Endothelial cell of umbilical vein (primary cell): ENCODE measurements at regions of chr5 and their contacts with region 1.

Region 1: DNA sequence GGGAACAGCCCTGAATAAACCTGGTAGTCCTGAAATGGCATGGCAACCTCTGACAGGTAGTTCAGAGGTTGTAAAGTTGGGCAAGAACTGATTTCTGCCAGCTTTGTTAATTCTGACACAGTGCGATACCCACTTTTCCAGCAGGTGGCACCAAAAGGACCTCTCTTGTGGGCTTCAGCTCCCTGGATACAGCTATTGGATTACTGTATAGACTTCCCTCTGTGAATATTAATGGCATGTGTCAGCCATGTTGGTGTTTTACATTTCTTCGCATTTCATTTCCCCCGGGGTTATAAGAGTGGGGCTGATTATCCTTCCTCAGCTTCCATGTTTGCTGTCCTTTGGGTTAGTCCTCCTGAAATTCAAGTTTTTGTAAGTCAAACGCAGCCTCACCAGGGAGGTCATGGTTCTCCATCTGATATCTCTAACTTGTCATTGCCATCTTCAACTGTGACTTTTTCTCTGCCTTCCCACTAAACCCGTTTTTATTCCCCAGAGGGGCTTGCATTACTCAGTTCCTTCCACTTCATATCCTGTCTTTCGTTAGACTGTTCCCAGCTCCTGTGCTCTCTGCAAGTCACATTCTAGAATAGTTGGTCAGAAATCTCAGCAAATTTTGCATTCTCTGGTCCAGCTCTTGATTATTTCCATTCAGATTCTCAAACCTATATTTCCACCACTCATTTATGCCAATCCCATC is 135.6 kb downstream of the LIFR start:
- DNase-seq: peak; percentile 73
- H3K4me3 ChIP-seq: peak overlapping the region in 1 of 3 experiments; percentile 32
- H3K27ac ChIP-seq: peak overlapping the region; percentile 39
- H3K4me1 ChIP-seq: peaks cover 11% of the 10 kb centered on the region
- H3K27me3 ChIP-seq: no peaks in the 10 kb centered on the region
- CTCF ChIP-seq: peak; percentile 74 to 81
- POLR2A ChIP-seq: no peak

Region 2: GRCh38 chr5:38382898-38383297 is 37.9 kb before region 1 on chr5:
- CTCF ChIA-PET with region 1: interaction called, 53 read pairs
- POLR2A ChIA-PET with region 1: no interaction called
- dilution Hi-C with region 1: no loop called
- intact Hi-C with region 1: loop called (anchors 1 kb)
- DNase-seq: peak; percentile 72
- H3K4me3 ChIP-seq: no peak overlapping the region
- H3K27ac ChIP-seq: no peak overlapping the region
- H3K4me1 ChIP-seq: no peaks in the 10 kb centered on the region
- H3K27me3 ChIP-seq: peaks cover under 1 to 2% of the 10 kb centered on the region in 2 experiments
- CTCF ChIP-seq: peak; percentile 80 to 81
- POLR2A ChIP-seq: no peak

Region 3: DNA sequence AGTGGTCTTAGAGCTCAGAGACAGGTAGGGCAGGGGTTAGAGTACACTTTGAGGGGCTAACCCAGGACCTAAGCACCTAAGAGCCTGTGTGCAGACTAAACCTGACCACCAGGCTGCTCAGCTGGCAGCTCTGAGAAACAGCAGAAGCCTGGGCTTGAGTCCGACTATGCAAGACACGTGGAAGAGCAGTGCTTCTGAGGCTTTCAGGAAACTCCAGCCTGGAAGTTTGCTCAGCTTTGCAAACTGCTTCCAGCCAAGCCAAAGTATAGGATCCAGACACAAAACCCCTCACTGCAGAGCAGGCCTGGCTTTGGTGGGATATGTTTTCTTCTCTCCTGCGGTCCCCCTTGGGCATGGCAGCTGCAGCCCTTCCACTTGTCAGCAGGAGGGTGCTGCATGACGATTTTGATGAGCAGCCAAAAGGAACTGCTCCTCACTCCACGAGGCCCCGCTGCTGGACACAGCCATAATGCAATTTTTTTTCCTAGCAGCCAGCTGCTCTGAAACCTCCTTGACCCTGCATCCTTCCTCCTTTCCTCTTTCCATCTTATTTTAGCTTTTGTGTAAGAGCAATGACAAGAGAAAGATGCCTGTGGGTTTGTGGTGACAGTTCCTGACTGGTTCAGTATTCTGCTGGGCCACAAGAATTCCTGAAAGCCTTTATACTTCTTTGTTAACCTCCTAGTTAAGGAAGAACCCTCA is 12.5 kb after region 1 on chr5:
- CTCF ChIA-PET with region 1: interaction called, 36 read pairs
- POLR2A ChIA-PET with region 1: no interaction called
- dilution Hi-C with region 1: no loop called
- intact Hi-C with region 1: loop called (anchors 1 kb)
- DNase-seq: peak; percentile 90
- H3K4me3 ChIP-seq: no peak overlapping the region
- H3K27ac ChIP-seq: peak overlapping the region; percentile 58
- H3K4me1 ChIP-seq: peaks cover 19% of the 10 kb centered on the region
- H3K27me3 ChIP-seq: no peaks in the 10 kb centered on the region
- CTCF ChIP-seq: peak in 1 of 2 donors; percentile 11
- POLR2A ChIP-seq: no peak

Region 4: GRCh38 chr5:38551030-38552017 is 130.5 kb after region 1 on chr5:
- CTCF ChIA-PET with region 1: interaction called, 11 read pairs
- POLR2A ChIA-PET with region 1: no interaction called
- dilution Hi-C with region 1: no loop called
- intact Hi-C with region 1: loop called (anchors 1 kb)
- DNase-seq: peak; percentile 59
- H3K4me3 ChIP-seq: no peak overlapping the region
- H3K27ac ChIP-seq: no peak overlapping the region
- H3K4me1 ChIP-seq: peaks cover 27% of the 10 kb centered on the region
- H3K27me3 ChIP-seq: no peaks in the 10 kb centered on the region
- CTCF ChIP-seq: peak; percentile 57 to 61
- POLR2A ChIP-seq: no peak

Region 5: GRCh38 chr5:38672059-38672788 is 251.4 kb after region 1 on chr5:
- CTCF ChIA-PET with region 1: interaction called, 20 read pairs
- POLR2A ChIA-PET with region 1: no interaction called
- dilution Hi-C with region 1: no loop called
- intact Hi-C with region 1: loop called (anchors 1 kb)
- DNase-seq: no peak
- H3K4me3 ChIP-seq: no peak overlapping the region
- H3K27ac ChIP-seq: no peak overlapping the region
- H3K4me1 ChIP-seq: no peaks in the 10 kb centered on the region
- H3K27me3 ChIP-seq: peaks cover 0 to 3% of the 10 kb centered on the region in 2 experiments
- CTCF ChIP-seq: no peak
- POLR2A ChIP-seq: no peak

Region 6: DNA sequence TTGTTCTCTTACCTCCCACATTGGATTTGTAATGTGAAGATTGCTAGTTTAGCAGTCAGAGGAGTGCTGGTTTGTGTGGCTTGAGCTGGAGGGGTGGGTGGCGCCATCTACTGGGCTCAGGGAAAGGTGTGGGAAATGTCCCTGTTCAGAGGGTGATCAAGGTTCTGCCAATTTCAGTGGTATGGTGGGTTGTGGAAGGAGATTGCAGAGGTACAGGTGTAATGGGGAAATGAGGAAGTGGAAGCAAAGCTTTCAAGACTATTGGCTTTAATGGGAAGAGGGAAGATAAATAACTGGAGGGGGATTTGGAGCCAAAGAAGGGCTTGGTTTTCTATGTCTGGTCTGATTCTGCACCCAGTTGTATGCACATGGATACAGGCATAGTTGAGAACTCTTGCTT is 501.4 kb after region 1 on chr5:
- CTCF ChIA-PET with region 1: interaction called, 17 read pairs
- POLR2A ChIA-PET with region 1: no interaction called
- dilution Hi-C with region 1: no loop called
- intact Hi-C with region 1: loop called (anchors 1 kb)
- DNase-seq: peak; percentile 65
- H3K4me3 ChIP-seq: no peak overlapping the region
- H3K27ac ChIP-seq: no peak overlapping the region
- H3K4me1 ChIP-seq: no peaks in the 10 kb centered on the region
- H3K27me3 ChIP-seq: peaks cover 0 to 3% of the 10 kb centered on the region in 2 experiments
- CTCF ChIP-seq: peak; percentile 87 to 88
- POLR2A ChIP-seq: no peak